AG04449 (cell line): ENCODE measurements at regions of chr4 and their contacts with region 1.

Region 1: DNA sequence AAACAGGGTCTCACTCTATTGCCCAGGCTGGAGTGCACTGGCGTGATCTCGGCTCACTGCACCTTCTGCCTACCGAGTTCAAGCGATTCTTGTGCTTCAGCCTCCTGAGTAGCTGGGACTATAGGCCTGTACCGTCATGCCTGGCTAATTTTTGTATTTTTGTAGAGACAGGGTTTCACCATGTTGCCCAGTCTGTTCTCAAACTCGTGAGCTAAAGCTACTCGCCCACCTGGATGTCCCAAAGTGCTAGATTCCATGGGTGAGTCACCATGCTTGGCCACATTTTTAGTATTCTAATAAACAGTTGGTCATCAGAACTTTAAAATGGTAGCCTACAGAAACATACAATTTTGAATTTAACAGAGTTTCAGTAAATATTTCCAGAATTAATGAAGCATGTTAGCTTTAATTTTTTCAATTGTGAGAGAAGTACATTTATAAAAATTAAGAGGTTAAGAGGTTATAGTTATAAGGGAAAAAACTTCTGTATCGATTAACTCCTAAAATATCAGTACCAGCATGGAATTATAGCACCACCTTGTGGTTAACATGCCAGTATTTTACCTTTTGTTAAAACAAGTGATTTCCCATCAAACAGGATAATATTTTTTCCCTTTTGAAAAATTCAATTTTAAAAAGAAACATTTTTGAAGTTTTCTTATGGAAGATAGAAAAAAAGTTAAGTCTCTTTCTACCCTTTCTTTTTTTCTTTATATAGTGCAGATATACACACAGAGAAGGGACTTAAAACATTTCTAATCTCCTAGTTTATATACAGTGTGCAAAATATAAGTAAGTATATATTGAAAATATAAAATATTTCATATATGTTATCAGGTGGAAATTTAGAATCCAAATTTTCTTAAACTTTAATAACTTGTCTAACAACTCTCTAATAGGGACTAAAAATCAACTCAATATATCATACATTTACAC is 35.4 kb downstream of the CEP44 start:
- DNase-seq: no peak
- H3K4me3 ChIP-seq: no peak overlapping the region
- CTCF ChIP-seq: peak; percentile 45

Region 2: GRCh38 chr4:174222266-174222872 is 96.7 kb before region 1 on chr4:
- CTCF ChIA-PET with region 1: interaction called, 61 read pairs
- POLR2A ChIA-PET with region 1: no interaction called
- DNase-seq: no peak
- H3K4me3 ChIP-seq: no peak overlapping the region
- CTCF ChIP-seq: peak; percentile 39